ENCODE measurements at regions of chr5 and their contacts with region 1.

Region 1: DNA sequence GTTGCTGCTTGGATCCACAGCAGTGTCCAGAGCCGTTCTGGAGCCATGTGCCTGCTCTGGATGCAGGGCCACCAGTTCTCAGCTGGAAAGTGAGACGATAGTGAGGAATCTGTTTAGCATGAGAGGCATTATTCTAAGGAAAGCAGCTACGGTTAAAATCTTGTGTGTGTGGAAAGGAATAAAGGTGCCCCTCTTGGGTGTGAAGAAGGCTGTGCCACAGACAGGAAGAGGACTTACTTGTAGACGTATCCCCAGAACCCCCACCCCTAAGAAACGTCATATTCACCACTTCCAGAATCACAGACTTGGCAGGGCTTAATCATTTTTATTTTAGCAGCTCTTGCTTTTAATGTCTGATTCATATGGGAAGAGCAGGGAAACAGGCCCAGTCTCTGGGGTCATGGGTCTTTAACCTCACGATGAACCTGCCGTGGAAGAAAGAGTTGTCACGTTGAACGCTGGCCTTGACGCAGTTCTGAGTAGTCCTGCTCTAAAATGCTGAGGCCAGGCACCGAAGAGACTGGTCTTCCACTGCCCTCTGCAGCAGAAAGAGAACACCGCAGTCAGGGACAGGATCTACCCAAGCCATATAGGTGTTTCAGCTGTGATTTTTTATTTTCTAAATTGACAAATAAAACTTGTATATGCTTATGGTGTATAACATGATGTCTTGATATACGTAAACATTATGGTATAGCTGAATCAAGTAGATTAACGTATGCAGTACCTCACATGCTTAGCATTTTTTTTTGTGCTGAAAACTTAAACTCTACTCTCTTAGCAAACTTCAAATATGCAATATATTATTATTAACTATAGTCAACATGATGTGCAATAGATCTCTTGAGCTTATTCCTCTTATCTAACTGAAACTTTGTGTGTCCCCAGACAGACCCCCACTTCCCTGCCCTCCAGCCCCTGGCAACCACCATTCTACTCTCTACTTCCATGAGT is 38.8 kb downstream of the CARTPT start:
- DNase-seq: peak; percentile 50 to 66 (median 54)
- ATAC-seq: peak; percentile 88 to 100 (median 98)
- H3K4me3 ChIP-seq: peak overlapping the region in 8 of 12 donors; percentile 16 to 39 (median 23)
- H3K27ac ChIP-seq: peak overlapping the region in 1 of 12 donors; percentile 39
- H3K4me1 ChIP-seq: peaks cover 0 to 5% (median 0%) of the 10 kb centered on the region in 12 donors
- H3K27me3 ChIP-seq: no peaks in the 10 kb centered on the region
- CTCF ChIP-seq: peak; percentile 57 to 77 (median 67)
- POLR2A ChIP-seq: no peak

Region 2: GRCh38 chr5:71475788-71476384 is 282.0 kb before region 1 on chr5:
- intact Hi-C with region 1: loop called in 3 of 10 experiments (anchors 5 to 10 kb)
- DNase-seq: no peak
- ATAC-seq: no peak
- H3K4me3 ChIP-seq: no peak overlapping the region
- H3K27ac ChIP-seq: no peak overlapping the region
- H3K4me1 ChIP-seq: no peaks in the 10 kb centered on the region
- H3K27me3 ChIP-seq: no peaks in the 10 kb centered on the region
- CTCF ChIP-seq: peak in 11 of 12 donors; percentile 19 to 48 (median 40)
- POLR2A ChIP-seq: no peak

Region 3: DNA sequence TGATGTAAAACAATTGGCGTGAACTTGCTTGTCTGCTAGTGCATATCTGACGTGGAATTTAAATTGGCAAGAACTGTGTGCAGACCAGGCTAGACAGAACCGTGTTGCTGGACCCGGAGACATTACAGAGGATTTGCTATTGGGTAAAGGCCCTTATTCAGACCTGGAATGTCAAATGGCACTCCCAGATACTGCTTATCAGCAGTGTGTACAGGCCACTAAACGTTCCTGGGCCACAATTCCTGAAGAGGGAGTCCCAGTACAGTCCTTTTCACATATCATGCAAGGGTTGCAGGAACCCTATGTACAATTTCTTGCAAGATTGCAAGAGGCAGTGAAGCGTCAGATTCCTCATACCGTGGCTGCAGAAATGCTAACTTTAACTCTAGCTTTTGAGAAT is 184.3 kb before region 1 on chr5:
- intact Hi-C with region 1: loop called (anchors 2 to 5 kb)
- DNase-seq: no peak
- ATAC-seq: peak; percentile 68 to 85 (median 82)
- H3K4me3 ChIP-seq: no peak overlapping the region
- H3K27ac ChIP-seq: no peak overlapping the region
- H3K4me1 ChIP-seq: peaks cover 0 to 8% (median 0%) of the 10 kb centered on the region in 12 donors
- H3K27me3 ChIP-seq: no peaks in the 10 kb centered on the region
- CTCF ChIP-seq: peak in 9 of 12 donors; percentile 5 to 38 (median 27)
- POLR2A ChIP-seq: no peak

Region 4: DNA sequence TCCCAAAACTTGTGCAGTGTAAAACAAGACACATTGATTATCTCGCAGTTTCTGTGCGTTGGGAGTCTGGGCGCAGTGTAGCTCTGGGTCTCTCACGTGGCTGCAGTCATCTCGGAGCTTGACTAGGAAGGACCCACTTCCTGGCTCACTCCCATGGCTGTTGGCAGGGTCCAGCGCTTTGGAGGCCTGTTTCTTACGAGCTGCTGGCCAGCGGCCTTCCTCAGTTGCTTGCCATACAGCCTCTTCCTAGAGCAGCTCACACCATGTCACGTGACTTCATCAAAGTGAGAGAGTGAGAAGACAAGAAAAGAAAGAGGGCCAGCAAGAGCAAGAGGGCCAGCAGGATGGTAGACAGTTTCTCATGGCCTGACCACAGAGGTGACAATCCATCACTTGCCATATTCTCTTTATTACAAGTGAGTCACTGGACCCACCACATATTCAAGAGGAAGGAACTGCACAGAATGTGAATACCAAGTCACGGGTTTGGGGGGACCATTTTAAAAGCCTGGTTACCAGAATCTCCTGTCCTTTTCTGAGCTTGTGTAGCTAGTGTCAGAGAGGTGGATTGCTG is 134.6 kb before region 1 on chr5:
- intact Hi-C with region 1: no loop called
- DNase-seq: peak in 1 of 5 donors; percentile 35
- ATAC-seq: peak in 1 of 4 donors; percentile 43
- H3K4me3 ChIP-seq: no peak overlapping the region
- H3K27ac ChIP-seq: no peak overlapping the region
- H3K4me1 ChIP-seq: peaks cover 0 to 11% (median 0%) of the 10 kb centered on the region in 12 donors
- H3K27me3 ChIP-seq: no peaks in the 10 kb centered on the region
- CTCF ChIP-seq: no peak
- POLR2A ChIP-seq: no peak

Region 5: GRCh38 chr5:71658916-71659662 is 98.8 kb before region 1 on chr5:
- intact Hi-C with region 1: loop called in 1 of 10 experiments (anchors 10 kb)
- DNase-seq: no peak
- ATAC-seq: no peak
- H3K4me3 ChIP-seq: no peak overlapping the region
- H3K27ac ChIP-seq: no peak overlapping the region
- H3K4me1 ChIP-seq: no peaks in the 10 kb centered on the region
- H3K27me3 ChIP-seq: no peaks in the 10 kb centered on the region
- CTCF ChIP-seq: peak in 2 of 12 donors; percentile 5 to 8
- POLR2A ChIP-seq: no peak

Region 6: GRCh38 chr5:71719063-71719964 is 38.6 kb before region 1 on chr5 and contains the start of gene CARTPT:
- intact Hi-C with region 1: no loop called
- DNase-seq: peak in 1 of 5 donors; percentile 25
- ATAC-seq: peak in 3 of 4 donors; percentile 71 to 79 (median 74)
- H3K4me3 ChIP-seq: no peak within 1 kb of the TSS
- H3K27ac ChIP-seq: no peak within 1 kb of the TSS
- H3K4me1 ChIP-seq: peaks cover 0 to 8% (median 0%) of the 10 kb centered on the region in 12 donors
- H3K27me3 ChIP-seq: peaks cover 12 to 74% (median 28%) of the 10 kb centered on the region in 9 donors
- CTCF ChIP-seq: no peak
- POLR2A ChIP-seq: no peak
- total RNA-seq, gene CARTPT: not detected

Region 7: GRCh38 chr5:71864730-71865601 is 107.1 kb after region 1 on chr5:
- intact Hi-C with region 1: no loop called
- DNase-seq: no peak
- ATAC-seq: peak in 3 of 4 donors; percentile 36 to 87 (median 70)
- H3K4me3 ChIP-seq: no peak overlapping the region
- H3K27ac ChIP-seq: no peak overlapping the region
- H3K4me1 ChIP-seq: peaks cover 0 to 10% (median 0%) of the 10 kb centered on the region in 12 donors
- H3K27me3 ChIP-seq: no peaks in the 10 kb centered on the region
- CTCF ChIP-seq: no peak
- POLR2A ChIP-seq: no peak